ENCODE measurements at regions of chr14 and their contacts with region 1.

Region 1: DNA sequence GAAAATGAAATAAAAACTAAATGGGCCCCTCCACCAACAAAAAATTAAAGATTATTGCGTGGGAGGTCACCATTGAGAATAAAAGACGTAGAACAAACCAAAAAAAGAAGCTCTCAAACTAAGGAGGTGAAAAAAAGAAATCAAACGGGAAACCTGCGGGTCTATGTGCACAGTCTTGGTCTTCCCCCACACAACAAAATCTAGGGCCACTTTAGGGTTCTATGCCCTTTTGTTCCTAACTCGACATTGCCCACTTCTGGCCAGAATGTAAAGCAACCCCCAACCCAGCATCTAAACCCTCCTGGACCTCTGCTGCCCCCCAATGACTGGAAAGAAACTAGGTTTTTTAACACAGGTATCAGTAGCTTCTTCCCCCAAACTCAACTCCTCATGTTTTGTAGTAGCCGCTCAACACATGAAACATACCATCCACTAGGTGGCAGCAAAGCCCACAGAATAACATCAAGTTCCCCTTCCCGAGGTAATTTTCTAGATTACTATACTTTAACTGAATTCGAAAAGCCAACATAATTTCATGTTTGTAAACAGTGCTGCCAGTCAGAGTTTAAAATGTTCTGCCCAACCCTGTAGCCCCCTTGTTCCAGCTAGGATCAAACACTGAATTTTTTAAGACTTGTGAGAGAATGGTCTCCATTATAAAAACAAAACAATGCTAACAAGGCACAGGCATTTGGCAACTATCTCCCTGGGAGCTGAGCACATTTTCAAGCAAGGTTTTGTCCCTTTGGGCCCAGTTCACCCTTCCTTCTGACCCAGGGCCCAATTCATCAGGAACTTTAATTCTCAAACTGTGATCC is 18.7 kb downstream of the DAD1 start:
- DNase-seq: peak; percentile 93
- H3K4me3 Mint-ChIP-seq: peak overlapping the region; percentile 85
- H3K27ac Mint-ChIP-seq: peak overlapping the region; percentile 97
- H3K4me1 Mint-ChIP-seq: peaks cover 68% of the 10 kb centered on the region
- H3K27me3 Mint-ChIP-seq: no peaks in the 10 kb centered on the region

Region 2: GRCh38 chr14:21734457-21735074 is 835.8 kb before region 1 on chr14:
- CTCF ChIA-PET with region 1: no interaction called
- intact Hi-C with region 1: loop called (anchors 5 kb)
- DNase-seq: peak; percentile 66
- H3K4me3 Mint-ChIP-seq: peak overlapping the region; percentile 61
- H3K27ac Mint-ChIP-seq: peak overlapping the region; percentile 65
- H3K4me1 Mint-ChIP-seq: peaks cover 16% of the 10 kb centered on the region
- H3K27me3 Mint-ChIP-seq: peaks cover 16% of the 10 kb centered on the region

Region 3: GRCh38 chr14:21917699-21918436 is 652.5 kb before region 1 on chr14:
- CTCF ChIA-PET with region 1: interaction called, 20 read pairs
- intact Hi-C with region 1: loop called (anchors 1 kb)
- DNase-seq: peak; percentile 82
- H3K4me3 Mint-ChIP-seq: peak overlapping the region; percentile 69
- H3K27ac Mint-ChIP-seq: peak overlapping the region; percentile 89
- H3K4me1 Mint-ChIP-seq: peaks cover 58% of the 10 kb centered on the region
- H3K27me3 Mint-ChIP-seq: no peaks in the 10 kb centered on the region

Region 4: DNA sequence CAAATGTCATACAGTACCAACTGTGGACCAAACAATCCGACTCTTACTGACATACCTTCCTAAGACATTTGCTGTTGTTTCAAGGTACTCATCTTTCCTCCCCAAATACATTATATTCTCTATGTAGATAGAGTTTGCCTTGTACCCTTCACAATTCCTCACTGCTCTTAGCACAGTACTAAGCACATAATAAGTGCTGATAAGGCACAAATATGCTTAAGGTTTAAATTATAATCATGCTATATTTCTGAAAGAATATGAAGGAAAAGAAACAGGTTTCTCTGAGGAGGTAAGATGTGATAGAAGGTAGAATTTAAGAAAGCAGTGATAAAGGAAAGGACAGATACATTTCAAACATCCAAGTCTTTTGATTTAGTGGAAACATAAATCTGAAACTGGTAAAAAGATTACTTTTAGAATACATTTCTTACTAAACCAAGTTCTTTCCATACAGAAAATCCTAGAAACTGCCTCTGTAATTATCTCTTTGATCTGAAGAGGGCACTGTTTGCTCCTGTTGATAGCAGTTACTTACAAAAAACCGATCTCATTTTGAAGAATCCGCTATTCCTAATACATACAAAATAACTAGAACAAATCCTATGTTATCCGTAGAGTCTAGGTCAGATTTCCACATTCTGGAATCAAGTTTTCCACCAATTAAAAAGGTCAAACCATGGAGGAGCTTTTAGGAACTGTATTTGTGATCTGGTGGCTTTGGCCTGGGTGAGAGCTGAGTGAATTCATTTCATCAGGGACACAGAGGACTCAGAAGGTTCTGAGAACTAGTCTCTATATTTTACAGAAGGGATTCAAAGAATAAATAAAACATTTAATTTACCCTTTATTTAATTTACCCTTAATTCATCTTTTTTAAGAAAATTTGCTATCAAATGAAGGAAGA is 293.2 kb before region 1 on chr14:
- CTCF ChIA-PET with region 1: no interaction called
- intact Hi-C with region 1: no loop called
- DNase-seq: no peak
- H3K4me3 Mint-ChIP-seq: no peak overlapping the region
- H3K27ac Mint-ChIP-seq: peak overlapping the region; percentile 46
- H3K4me1 Mint-ChIP-seq: peaks cover 2% of the 10 kb centered on the region
- H3K27me3 Mint-ChIP-seq: no peaks in the 10 kb centered on the region

Region 5: DNA sequence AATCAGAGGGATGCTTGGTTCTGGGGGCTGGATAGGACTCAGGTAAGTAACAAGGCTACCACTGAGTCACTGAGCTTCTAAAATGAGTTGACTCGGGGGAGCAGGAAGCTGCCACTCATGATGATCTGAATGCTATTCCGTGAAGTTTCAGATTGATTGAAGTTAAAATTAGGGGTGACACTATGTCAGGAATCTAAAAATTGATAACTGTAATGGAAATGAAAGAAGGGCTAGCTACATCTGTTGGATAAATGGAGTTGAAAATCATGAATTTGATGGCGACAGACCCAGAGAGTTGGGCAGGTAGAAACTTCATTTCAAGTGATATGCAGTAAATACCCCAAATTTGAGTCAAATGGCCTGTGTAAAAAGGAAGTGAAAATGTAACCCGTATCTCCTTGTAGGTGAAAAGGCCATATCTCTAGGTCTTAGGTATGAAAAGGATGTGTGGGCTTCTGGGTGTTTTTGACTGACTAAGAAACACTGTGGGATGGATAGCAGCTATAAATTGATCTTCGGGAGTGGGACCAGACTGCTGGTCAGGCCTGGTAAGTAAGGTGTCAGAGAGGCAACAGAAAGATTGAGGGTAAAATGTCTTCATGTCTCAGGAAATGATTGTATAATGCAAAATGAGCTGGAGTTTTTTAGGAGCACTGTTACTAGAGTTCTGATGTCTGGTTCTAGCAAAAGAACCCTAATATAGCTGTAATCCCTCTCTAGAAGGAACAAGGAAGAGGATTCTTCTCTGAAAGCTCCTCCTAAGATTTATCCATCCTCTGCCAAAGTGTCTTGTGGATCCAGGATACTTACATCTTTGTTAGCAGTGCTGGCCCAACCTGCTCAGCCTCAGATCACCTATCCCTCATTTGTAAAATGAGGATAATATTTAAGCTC is 38.6 kb before region 1 on chr14:
- CTCF ChIA-PET with region 1: interaction called, 27 read pairs
- intact Hi-C with region 1: loop called (anchors 5 kb)
- DNase-seq: peak; percentile 65
- H3K4me3 Mint-ChIP-seq: peak overlapping the region; percentile 77
- H3K27ac Mint-ChIP-seq: peak overlapping the region; percentile 98
- H3K4me1 Mint-ChIP-seq: peaks cover 82% of the 10 kb centered on the region
- H3K27me3 Mint-ChIP-seq: no peaks in the 10 kb centered on the region

Region 6: DNA sequence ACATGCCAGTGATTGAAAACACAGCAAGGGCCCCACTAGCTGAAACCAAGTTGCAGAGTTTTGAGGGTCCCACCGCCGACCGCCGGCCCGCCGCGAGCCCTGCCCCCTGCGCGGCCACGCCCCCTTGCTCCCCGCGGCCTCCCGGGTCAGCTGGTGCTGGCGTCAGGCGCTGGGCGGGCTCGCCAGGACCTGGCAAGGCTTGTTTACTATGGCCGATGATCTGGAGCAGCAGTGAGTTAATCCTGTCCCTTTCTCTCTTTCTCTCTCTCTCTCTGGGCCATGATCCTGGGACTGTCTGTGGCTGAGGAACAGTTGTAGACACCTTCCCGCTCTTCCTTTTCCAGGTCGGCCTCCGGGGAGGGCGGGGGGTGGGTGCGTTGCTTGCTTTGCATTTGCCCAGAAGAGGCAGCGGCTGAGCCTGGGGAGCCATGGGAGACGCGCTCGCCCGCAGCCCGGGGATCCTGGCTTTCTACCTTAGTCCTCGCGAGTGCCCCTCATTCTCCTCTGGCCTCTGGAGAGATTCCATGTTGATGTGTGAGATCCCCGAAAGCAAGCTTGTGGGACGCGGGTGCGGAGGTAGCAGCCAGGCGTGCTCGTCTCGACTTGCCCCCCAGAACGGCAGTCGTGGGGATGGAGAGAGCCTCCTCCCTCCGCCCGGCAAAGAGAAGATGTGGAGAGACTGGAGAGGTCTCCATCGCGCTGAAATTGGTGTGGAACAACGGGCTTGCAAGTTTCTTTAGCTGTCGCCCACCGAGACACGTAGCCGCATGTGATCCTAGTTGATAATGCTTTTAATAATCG is 28.0 kb after region 1 on chr14 and contains the start of gene ABHD4:
- CTCF ChIA-PET with region 1: interaction called, 33 read pairs
- intact Hi-C with region 1: no loop called
- DNase-seq: peak; percentile 75
- H3K4me3 Mint-ChIP-seq: peak within 1 kb of the TSS; percentile 90
- H3K27ac Mint-ChIP-seq: peak within 1 kb of the TSS; percentile 72
- H3K4me1 Mint-ChIP-seq: peaks cover 28% of the 10 kb centered on the region
- H3K27me3 Mint-ChIP-seq: no peaks in the 10 kb centered on the region
- total RNA-seq, gene ABHD4: 11.1 to 11.9 TPM

Region 7: GRCh38 chr14:22766456-22767322 is 196.3 kb after region 1 on chr14 and contains the start of gene OXA1L:
- CTCF ChIA-PET with region 1: interaction called, 8 read pairs
- intact Hi-C with region 1: loop called (anchors 5 kb)
- DNase-seq: peak; percentile 99
- H3K4me3 Mint-ChIP-seq: peak within 1 kb of the TSS; percentile 83
- H3K27ac Mint-ChIP-seq: peak within 1 kb of the TSS; percentile 95
- H3K4me1 Mint-ChIP-seq: peaks cover 31% of the 10 kb centered on the region
- H3K27me3 Mint-ChIP-seq: no peaks in the 10 kb centered on the region
- total RNA-seq, gene OXA1L: 149 to 152 TPM

Region 8: DNA sequence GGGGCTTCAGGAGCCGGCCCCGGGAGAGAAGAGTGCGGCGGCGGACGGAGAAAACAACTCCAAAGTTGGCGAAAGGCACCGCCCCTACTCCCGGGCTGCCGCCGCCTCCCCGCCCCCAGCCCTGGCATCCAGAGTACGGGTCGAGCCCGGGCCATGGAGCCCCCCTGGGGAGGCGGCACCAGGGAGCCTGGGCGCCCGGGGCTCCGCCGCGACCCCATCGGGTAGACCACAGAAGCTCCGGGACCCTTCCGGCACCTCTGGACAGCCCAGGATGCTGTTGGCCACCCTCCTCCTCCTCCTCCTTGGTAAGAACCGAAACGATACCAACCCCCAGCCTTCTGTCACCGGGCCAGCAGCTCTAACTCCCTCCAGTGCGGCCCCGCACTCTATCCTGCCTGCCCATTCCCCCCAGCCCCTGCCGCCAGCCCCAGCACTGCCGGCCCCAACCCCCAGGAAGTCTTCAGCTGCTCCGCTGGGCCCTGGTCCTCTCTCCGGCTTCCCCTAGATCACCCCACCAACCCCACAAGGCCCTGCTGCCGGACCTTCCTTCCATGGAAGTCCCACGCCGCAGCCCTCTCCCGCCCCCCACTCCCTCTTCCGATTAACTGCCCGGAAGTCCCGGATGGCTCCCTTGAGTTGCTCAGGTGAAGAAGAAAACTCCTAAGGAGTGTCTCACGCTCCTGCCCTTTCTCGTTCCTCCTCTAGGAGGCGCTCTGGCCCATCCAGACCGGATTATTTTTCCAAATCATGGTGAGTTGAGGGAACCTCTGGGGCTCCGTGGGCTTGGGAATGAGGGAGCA is 301.9 kb after region 1 on chr14:
- CTCF ChIA-PET with region 1: interaction called, 4 read pairs
- intact Hi-C with region 1: loop called (anchors 1 kb)
- DNase-seq: peak; percentile 87
- H3K4me3 Mint-ChIP-seq: peak overlapping the region; percentile 91
- H3K27ac Mint-ChIP-seq: peak overlapping the region; percentile 100
- H3K4me1 Mint-ChIP-seq: peaks cover 29% of the 10 kb centered on the region
- H3K27me3 Mint-ChIP-seq: no peaks in the 10 kb centered on the region